CD4-positive, alpha-beta T cell (primary cell): ENCODE measurements at regions of chr10 and their contacts with region 1.

Region 1: DNA sequence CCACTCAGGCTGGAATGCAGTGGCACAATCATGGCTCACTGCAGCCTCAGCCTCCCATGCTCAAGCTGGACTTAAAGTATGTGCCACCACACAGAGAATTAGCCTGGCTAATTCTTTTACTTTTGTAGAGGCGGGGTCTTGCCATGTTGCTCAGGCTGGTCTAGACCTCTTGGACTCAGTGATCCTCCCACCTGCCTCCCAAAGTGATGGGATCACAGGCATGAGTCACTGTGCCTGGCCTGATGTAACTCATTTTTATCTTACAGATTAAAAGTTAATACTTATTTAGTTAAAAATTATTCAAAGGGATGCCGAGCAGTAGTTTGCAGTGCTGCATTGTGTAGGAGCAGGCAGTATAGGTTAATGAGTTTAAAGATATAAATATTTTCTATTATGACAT is 12.6 kb upstream of the PLXDC2 start:
- DNase-seq: no peak
- ATAC-seq: no peak
- H3K4me3 ChIP-seq: no peak overlapping the region
- H3K4me3 Mint-ChIP-seq: no peak overlapping the region
- H3K27ac ChIP-seq: no peak overlapping the region
- H3K27ac Mint-ChIP-seq: no peak overlapping the region
- H3K4me1 ChIP-seq: no peaks in the 10 kb centered on the region
- H3K4me1 Mint-ChIP-seq: no peaks in the 10 kb centered on the region
- H3K27me3 ChIP-seq: no peaks in the 10 kb centered on the region
- H3K27me3 Mint-ChIP-seq: no peaks in the 10 kb centered on the region
- CTCF ChIP-seq: no peak

Region 2: GRCh38 chr10:19638182-19638895 is 165.3 kb before region 1 on chr10:
- CTCF ChIA-PET with region 1: no interaction called
- POLR2A ChIA-PET with region 1: no interaction called
- intact Hi-C with region 1: no loop called
- DNase-seq: peak in 2 of 14 experiments; percentile 11 to 23
- ATAC-seq: no peak
- H3K4me3 ChIP-seq: no peak overlapping the region
- H3K4me3 Mint-ChIP-seq: no peak overlapping the region
- H3K27ac ChIP-seq: no peak overlapping the region
- H3K27ac Mint-ChIP-seq: no peak overlapping the region
- H3K4me1 ChIP-seq: no peaks in the 10 kb centered on the region
- H3K4me1 Mint-ChIP-seq: no peaks in the 10 kb centered on the region
- H3K27me3 ChIP-seq: no peaks in the 10 kb centered on the region
- H3K27me3 Mint-ChIP-seq: no peaks in the 10 kb centered on the region
- CTCF ChIP-seq: no peak

Region 3: DNA sequence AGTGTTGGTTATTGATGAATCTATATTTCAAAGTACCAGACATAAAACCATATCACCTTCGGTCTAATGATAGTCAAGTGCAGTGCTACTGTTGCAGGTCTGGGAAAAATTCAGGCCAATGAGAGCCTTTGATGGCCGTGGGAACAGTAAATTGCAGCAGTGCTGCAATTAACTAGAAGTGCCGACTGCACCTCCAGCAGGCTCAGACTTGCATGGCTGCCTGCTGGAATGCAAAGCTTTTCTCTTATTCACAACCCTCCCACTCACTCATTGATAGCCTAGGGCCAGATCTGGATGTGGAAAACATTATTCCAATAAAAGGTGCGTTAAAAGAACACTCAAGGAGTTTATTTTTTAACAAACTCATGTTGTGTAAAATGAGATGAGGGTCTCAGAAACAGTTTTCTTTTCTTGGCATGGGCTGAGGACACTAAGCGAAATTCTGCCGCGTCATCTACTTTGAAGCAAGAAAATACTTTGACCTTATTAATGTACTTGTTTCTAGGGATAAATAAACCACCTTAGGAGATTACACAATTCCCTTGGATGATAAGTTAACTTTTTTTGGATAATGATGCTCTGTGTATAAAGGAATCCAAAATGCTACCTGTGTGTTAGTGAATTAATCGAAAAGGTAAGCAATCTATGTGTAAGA is 29.6 kb after region 1 on chr10:
- CTCF ChIA-PET with region 1: no interaction called
- POLR2A ChIA-PET with region 1: no interaction called
- intact Hi-C with region 1: loop called in 1 of 2 experiments (anchors 2 kb)
- DNase-seq: no peak
- ATAC-seq: no peak
- H3K4me3 ChIP-seq: no peak overlapping the region
- H3K4me3 Mint-ChIP-seq: no peak overlapping the region
- H3K27ac ChIP-seq: no peak overlapping the region
- H3K27ac Mint-ChIP-seq: no peak overlapping the region
- H3K4me1 ChIP-seq: no peaks in the 10 kb centered on the region
- H3K4me1 Mint-ChIP-seq: no peaks in the 10 kb centered on the region
- H3K27me3 ChIP-seq: no peaks in the 10 kb centered on the region
- H3K27me3 Mint-ChIP-seq: no peaks in the 10 kb centered on the region
- CTCF ChIP-seq: no peak